IMR-90 (cell line): ENCODE measurements at regions of chr5 and their contacts with region 1.

Region 1: GRCh38 chr5:43602461-43603343 is at the start of gene NNT:
- DNase-seq: peak; percentile 50
- ATAC-seq: peak; percentile 80
- H3K4me3 ChIP-seq: peak within 1 kb of the TSS; percentile 73
- H3K27ac ChIP-seq: peak within 1 kb of the TSS; percentile 87
- H3K4me1 ChIP-seq: peaks cover 2% of the 10 kb centered on the region
- H3K27me3 ChIP-seq: no peaks in the 10 kb centered on the region
- CTCF ChIP-seq: no peak
- POLR2A ChIP-seq: no peak
- RAD21 ChIP-seq: no peak
- total RNA-seq, gene NNT: 57.2 and 58.0 TPM in 2 replicates

Region 2: DNA sequence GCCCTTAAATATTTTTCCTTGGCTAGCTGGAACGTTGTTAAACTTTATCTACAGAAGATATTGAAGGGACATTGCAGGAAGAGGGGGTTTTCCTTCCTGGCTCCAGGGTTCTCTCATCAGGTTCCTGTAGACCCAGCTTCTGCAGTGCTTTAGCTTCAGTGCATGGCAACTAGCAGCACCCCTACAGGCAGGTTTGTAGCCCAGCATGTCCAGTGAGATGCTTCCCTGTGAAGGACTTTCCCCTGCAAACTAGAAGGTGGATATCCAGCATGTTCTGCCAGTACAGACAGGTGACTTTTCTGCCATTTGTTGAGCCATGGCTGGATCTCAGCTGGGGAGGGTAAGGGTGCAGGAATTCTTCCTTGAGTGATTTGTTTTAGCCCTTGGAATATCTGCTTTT is 200.9 kb before region 1 on chr5:
- CTCF ChIA-PET with region 1: no interaction called
- POLR2A ChIA-PET with region 1: no interaction called
- dilution Hi-C with region 1: no loop called
- in situ Hi-C with region 1: no loop called
- intact Hi-C with region 1: loop called (anchors 1 kb)
- DNase-seq: peak; percentile 13
- ATAC-seq: peak; percentile 56; the same call in 1 of the 2 replicates
- H3K4me3 ChIP-seq: no peak overlapping the region
- H3K27ac ChIP-seq: no peak overlapping the region
- H3K4me1 ChIP-seq: no peaks in the 10 kb centered on the region
- H3K27me3 ChIP-seq: peaks cover 8% of the 10 kb centered on the region
- CTCF ChIP-seq: 0 out of 2 replicates have a peak, but pooled peaks have one; percentile 17
- POLR2A ChIP-seq: no peak
- RAD21 ChIP-seq: no peak

Region 3: GRCh38 chr5:43556857-43557542 is 45.7 kb before region 1 on chr5 and contains the start of gene PAIP1:
- CTCF ChIA-PET with region 1: no interaction called
- POLR2A ChIA-PET with region 1: no interaction called
- dilution Hi-C with region 1: no loop called
- in situ Hi-C with region 1: no loop called
- intact Hi-C with region 1: loop called (anchors 1 kb)
- DNase-seq: peak; percentile 86
- ATAC-seq: peak; percentile 92
- H3K4me3 ChIP-seq: peak within 1 kb of the TSS; percentile 65
- H3K27ac ChIP-seq: peak within 1 kb of the TSS; percentile 74
- H3K4me1 ChIP-seq: peaks cover 4% of the 10 kb centered on the region
- H3K27me3 ChIP-seq: no peaks in the 10 kb centered on the region
- CTCF ChIP-seq: peak; percentile 63
- POLR2A ChIP-seq: peak; percentile 84
- RAD21 ChIP-seq: no peak
- total RNA-seq, gene PAIP1: 101 and 123 TPM in 2 replicates